ENCODE measurements at regions of chr10 and their contacts with region 1.

Region 1: DNA sequence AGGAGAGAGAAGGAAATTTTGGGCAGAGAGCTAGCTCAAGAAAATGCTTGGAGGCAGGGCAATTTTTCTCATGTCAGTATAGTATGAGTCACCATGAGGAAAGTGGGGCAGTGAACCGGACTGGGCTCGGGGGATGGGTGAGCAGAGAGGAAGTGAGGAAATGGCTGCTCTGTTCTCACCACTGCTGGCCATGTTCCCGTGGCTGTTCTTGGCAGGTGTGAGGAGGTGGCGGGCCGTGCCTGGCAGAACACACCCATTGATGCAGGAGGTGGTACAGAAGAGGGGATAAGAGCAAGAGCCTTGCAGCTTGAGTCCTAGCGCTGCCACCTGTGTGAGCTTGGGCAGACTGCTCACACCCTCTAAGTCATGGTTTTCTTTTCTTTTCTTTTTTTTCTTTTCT is 304.4 kb upstream of the LYZL1 start:
- DNase-seq: peak; percentile 86

Region 2: GRCh38 chr10:28807760-28808613 is 176.4 kb before region 1 on chr10:
- intact Hi-C with region 1: loop called (anchors 10 kb)
- DNase-seq: no peak

Region 3: DNA sequence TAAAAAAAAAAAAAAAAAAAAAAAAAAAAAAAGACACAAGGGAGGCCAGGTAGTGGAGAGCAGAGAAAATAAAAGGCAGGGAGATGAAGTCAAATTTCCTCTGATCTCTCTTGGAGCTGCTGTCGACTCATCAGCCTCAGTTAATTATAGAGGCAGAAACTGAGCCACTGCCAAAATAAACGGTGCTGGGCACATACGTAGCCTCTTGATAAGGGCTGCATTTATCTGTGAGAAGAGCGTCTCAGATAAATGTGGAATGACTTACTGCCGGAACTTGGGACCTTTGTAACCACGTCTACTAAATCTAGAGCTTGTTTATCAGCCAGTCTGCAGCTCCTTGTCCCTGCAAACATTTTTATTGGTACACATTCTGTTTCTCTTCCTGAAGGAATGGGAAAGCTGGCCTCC is 144.8 kb before region 1 on chr10:
- intact Hi-C with region 1: loop called (anchors 2 kb)
- DNase-seq: no peak

Region 4: DNA sequence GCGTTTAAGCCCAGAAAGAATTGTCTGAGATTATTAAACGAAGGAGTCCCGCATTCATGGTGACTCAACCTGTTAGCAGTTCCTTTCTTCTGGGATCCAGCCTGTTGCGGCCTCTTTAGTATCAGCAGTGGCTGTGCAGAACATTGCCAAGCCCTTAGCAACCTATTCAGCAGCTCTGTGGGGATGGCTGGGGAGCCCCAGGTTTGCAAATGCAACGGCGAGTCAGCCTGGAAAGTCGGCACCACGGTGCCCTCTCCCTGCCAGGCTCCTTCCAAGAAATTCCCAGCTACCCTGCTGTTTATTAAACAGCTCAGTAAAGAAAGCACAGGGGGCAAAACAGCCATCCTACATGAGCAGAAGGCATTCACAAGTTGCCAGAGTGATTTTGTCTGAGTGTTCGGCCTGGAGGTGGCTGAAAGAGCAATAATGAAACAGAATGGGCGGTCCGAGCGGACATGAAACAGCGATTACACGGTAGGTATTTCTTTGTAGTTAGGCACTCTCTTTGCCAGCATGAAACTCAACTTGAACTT is 108.8 kb before region 1 on chr10:
- intact Hi-C with region 1: loop called (anchors 5 kb)
- DNase-seq: no peak

Region 5: DNA sequence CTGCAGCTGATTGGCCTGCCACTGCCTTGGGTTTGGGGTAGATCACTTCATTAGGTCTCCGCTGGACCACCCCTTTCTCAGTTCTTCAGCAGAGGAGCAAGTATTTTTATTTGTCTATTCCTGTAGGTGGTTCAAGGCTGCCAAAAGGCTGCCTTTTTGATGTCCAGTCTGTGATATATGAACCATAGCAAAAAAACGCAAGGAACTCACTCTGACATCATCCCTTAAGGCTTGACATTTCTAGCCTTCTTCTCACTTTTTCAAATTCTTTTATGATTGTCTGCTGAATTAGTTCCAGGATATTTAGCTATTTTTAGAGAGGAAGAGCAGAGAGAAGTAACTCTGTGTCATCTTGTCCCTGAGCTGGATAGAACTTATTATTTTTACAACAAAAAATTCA is 38.0 kb before region 1 on chr10:
- intact Hi-C with region 1: loop called (anchors 5 kb)
- DNase-seq: no peak

Region 6: GRCh38 chr10:29784175-29784773 is 799.8 kb after region 1 on chr10:
- intact Hi-C with region 1: no loop called
- DNase-seq: peak; percentile 77

Measured in cardiac septum (tissue), 1 donor.